ENCODE measurements at regions of chr22 and their contacts with region 1.

Region 1: DNA sequence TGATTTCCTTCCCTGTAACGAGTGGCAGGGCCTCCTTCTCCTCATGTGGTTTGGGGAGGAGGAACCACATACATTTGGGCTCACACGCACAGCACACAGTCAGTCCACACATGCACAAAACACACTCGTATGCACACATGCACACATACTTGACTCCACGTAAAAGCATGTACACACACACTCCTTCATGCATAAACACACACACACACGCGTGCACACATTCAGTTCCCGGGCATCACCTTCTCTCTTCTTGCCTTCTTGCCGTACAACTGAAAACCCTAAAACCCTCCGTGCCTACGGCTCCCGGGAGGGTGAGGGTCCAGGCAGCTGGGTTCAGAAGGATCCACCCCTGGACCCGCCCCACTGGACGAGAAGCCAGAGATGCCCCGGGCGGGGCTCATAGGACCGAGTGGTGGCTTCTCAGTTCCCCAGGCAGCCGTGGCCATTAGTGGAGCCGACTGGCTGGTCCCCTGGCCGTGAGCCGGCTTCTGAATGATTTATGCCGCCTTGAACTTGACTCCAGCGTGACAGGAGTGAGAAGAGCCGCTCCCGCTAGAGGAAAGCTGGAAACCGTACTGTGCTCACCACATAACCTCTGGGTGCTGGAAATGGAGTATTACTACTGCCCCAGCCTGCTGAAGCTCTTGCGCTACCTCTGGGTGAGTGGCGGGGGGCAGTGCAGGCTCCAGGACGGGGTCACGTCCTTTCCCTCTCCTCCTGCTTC is 117.4 kb downstream of the KIAA1671 start:
- DNase-seq: no peak
- H3K4me3 ChIP-seq: peak overlapping the region in 2 of 4 donors; percentile 15 to 20
- H3K27ac ChIP-seq: peak overlapping the region; percentile 17 to 51 (median 31)
- H3K4me1 ChIP-seq: peaks cover 0 to 4% (median 4%) of the 10 kb centered on the region in 4 donors
- H3K27me3 ChIP-seq: no peaks in the 10 kb centered on the region
- CTCF ChIP-seq: no peak
- EP300 ChIP-seq: no peak
- POLR2A ChIP-seq: no peak

Region 2: GRCh38 chr22:25172153-25172552 is 102.2 kb after region 1 on chr22:
- in situ Hi-C with region 1: loop called in 1 of 4 experiments (anchors 10 kb)
- intact Hi-C with region 1: no loop called
- DNase-seq: peak; percentile 52
- H3K4me3 ChIP-seq: no peak overlapping the region
- H3K27ac ChIP-seq: no peak overlapping the region
- H3K4me1 ChIP-seq: no peaks in the 10 kb centered on the region
- H3K27me3 ChIP-seq: no peaks in the 10 kb centered on the region
- CTCF ChIP-seq: peak; percentile 30 to 68 (median 46)
- EP300 ChIP-seq: no peak
- POLR2A ChIP-seq: no peak